GM10248 (cell line): ENCODE measurements at regions of chr1 and their contacts with region 1.

Region 1: GRCh38 chr1:229714964-229715603 is 89.0 kb downstream of the URB2 start:
- DNase-seq: peak; percentile 33
- CTCF ChIP-seq: peak; percentile 48

Region 2: GRCh38 chr1:229699613-229700267 is 15.3 kb before region 1 on chr1:
- CTCF ChIA-PET with region 1: interaction called, 10 read pairs
- POLR2A ChIA-PET with region 1: no interaction called
- DNase-seq: no peak
- CTCF ChIP-seq: no peak

Region 3: DNA sequence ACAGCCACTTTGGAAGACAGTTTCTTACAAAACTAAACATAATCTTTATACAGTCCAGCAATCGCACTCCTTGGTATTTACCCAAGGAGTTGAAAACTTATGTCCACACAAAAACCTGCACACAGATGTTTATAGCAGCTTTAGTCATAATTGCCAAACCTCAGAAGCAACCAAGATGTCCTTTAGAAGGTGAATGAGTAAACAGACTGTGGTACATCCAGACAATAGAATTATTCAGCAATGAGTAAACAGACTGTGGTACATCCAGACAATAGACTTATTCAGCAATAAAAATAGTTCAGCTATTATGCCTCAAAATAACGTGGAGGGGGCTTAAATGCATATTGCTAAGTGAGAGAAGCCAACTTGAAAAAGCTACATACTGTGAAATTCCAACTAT is 264.9 kb after region 1 on chr1:
- CTCF ChIA-PET with region 1: no interaction called
- POLR2A ChIA-PET with region 1: no interaction called
- DNase-seq: no peak
- CTCF ChIP-seq: no peak